OCI-LY7 (cell line): ENCODE measurements at regions of chr11 and their contacts with region 1.

Region 1: GRCh38 chr11:123707606-123708205 is 33.8 kb downstream of the ZNF202 start:
- DNase-seq: peak; percentile 26
- H3K4me3 ChIP-seq: no peak overlapping the region
- H3K27ac ChIP-seq: no peak overlapping the region
- H3K4me1 ChIP-seq: no peaks in the 10 kb centered on the region
- CTCF ChIP-seq: peak; percentile 77

Region 2: GRCh38 chr11:123580557-123581275 is 127.0 kb before region 1 on chr11:
- CTCF ChIA-PET with region 1: interaction called, 3 read pairs
- POLR2A ChIA-PET with region 1: no interaction called
- intact Hi-C with region 1: loop called (anchors 5 kb)
- DNase-seq: peak; percentile 63
- H3K4me3 ChIP-seq: no peak overlapping the region
- H3K27ac ChIP-seq: no peak overlapping the region
- H3K4me1 ChIP-seq: no peaks in the 10 kb centered on the region
- CTCF ChIP-seq: peak; percentile 87

Region 3: DNA sequence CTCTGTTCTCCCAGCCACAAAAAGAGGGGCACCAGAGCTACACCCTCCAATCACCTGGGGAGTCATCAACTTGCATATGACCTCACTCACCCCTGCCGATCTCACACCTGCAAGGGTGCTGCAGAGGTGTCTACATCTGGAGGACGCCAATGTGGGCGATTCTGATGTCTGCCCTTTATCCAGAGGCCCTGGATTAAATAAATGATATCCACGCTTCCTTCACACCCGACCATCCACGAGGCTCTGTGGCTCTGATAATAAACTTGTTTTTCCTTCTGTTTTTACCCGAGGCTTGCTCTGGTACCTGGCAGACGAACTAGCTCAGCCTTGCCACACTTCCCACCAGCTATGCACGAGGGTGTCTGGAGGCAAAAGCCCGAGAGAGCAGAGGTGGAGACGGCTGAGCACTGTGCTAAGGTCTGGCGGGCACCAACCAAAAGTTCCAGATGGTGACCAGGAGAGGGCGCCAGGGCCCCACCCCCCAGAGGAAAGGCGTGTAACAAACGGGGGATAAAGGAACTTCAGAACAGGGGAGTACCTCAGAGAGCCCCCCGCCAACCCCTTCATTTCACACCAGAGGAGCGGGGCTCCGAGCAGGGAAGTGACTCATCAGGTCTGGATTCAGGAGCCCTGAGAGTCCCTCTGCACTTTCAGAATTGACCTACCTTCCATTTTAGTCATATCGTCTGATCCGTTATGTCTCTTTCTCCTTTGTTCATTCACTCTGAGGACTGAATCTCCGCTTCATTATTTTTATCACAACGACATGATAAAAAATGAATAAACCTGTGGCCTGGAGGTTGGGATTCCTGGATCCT is 66.8 kb before region 1 on chr11:
- CTCF ChIA-PET with region 1: interaction called, 3 read pairs
- POLR2A ChIA-PET with region 1: interaction called, 4 read pairs
- intact Hi-C with region 1: loop called (anchors 1 kb)
- DNase-seq: peak; percentile 50
- H3K4me3 ChIP-seq: no peak overlapping the region
- H3K27ac ChIP-seq: no peak overlapping the region
- H3K4me1 ChIP-seq: no peaks in the 10 kb centered on the region
- CTCF ChIP-seq: peak; percentile 89

Region 4: GRCh38 chr11:123885570-123885969 is 177.9 kb after region 1 on chr11 and contains the start of gene TMEM225:
- CTCF ChIA-PET with region 1: no interaction called
- POLR2A ChIA-PET with region 1: no interaction called
- intact Hi-C with region 1: no loop called
- DNase-seq: no peak
- H3K4me3 ChIP-seq: no peak within 1 kb of the TSS
- H3K27ac ChIP-seq: no peak within 1 kb of the TSS
- H3K4me1 ChIP-seq: no peaks in the 10 kb centered on the region
- CTCF ChIP-seq: no peak
- total RNA-seq, gene TMEM225: not detected in 2 replicates